ENCODE measurements at regions of chr16 and their contacts with region 1.

Region 1: DNA sequence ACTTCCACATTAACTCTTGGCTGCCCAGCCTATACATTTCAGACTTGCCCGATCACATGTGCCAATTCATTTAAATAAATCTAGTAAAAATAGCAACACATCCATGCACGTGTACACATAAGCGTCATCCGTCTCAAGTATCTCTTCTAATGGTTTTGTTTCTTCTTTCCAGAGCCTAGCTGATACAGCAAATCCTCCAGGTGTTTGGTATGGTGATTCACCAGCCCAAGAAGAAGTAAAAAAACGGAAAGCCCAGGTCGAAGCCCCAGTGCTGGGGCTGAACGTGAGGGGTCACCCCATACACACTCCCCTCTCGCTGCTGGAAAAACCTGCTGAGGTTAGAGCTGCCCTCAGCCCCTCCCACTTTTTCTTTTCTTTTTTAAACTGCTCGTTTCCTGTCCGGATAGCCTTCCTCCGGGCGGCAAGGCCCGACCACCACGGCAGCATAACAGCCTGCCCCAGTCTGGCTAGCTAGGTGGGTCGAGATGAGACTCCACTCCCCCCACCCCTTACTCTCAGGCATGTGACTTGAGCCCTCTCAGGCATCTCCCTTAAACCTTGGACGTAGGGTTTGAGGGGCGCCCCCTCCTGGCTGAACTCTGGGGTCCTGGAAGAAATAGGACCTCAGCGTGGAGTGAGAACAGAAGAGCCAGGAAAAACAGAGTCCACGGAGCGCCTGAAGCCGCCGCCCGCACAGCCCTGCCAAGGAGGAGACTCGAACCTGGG is 13.9 kb upstream of the OR1F1 start:
- DNase-seq: no peak
- H3K4me3 ChIP-seq: peak overlapping the region; percentile 23; the same call in 1 of the 2 replicates
- CTCF ChIP-seq: peak; percentile 37

Region 2: DNA sequence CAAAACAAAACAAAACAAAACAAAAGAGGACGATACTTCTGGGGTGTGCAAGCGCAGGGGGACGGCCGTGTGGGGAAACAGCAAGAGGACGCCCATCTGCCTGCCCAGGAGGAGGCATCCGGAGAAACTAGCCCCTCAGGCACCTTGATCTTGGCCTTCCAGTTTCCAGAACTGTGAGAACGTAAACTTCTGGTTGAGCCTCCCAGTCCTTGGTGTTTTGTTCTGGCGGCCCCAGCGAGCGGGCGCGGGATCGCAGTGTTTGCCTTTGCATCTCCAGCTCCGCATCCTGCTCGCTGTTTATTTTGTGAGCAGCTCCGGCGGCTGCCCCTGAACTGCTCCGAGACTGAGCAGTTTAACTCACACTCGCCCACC is 128.7 kb before region 1 on chr16:
- CTCF ChIA-PET with region 1: no interaction called
- POLR2A ChIA-PET with region 1: no interaction called
- DNase-seq: no peak
- H3K4me3 ChIP-seq: peak overlapping the region; percentile 43
- CTCF ChIP-seq: no peak

Region 3: DNA sequence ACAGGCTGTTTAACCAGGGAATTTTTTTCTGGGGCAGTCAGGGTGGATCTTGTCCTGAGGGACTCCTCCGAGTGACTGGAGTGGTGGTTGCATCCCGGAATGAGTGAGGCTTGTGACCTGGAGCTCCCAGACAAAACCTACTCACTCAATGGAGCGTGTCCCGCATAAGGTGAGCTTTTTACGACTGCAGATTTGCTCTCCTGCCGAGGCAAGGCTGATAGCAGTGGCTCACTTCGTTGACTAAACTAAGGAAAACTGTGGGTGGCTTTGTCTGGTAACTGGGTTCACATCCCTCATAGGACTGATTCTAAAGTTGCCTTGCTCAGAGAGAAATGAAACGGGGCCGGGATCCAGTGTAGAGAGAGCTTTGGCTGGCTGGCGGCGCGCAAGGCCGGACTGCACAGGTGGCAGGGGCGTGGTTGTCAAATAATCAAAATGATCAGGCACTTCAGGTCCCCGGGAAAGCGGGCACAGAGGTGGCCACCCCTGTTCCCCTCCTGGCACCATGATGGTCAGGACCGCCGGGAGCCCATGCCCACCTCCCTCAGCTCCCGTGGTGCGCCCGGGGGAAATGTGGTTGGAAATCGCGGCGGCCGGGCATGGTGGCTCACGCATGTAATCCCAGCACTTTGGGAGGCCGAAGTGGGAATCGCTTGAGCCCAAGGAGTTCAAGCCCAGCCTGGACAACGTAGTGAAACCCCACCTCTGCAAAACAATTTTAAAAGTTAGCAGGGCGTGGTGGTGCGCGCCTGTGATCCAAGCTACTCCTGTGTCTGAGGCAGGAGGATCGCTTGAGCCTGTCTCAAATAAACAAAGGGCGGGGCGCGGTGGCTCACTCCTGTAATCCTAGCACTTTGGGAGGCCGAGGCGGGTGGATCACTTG is 12.7 kb before region 1 on chr16:
- CTCF ChIA-PET with region 1: interaction called, 15 read pairs
- POLR2A ChIA-PET with region 1: no interaction called
- DNase-seq: no peak
- H3K4me3 ChIP-seq: no peak overlapping the region
- CTCF ChIP-seq: no peak

Region 4: DNA sequence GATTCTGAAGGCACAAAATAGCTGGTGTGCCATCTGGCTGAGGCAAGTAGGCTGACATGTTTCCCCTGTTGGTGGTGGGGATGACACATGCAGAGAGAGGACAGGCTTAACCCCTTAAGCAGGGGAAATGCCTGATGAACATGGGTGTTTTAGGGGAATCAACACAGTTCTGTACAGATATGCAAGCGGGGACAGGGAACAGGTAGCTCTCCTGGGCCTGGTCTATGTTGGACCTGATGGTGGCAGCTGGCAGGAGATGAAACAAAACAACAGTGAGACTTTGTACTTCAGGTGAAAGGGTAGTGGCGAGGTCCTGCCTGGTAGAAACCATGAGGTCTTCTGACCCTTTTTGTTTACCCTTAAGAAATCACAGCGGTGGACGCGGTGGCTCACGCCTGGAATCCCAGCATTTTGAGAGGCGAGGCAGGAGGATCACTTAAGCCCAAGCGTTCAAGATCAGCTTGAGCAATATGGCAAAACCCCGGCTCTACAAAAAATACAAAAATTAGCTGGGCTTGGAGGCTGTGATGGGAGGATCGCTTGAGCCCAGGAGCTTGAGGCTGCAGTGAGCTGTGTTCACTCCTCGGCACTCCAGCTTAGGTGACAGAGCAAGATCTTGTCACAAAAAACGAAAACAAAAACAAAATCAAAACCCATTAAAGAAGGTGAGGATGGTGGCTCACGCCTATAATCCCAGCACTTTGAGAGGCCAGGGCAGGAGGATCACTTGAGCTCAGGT is 24.4 kb after region 1 on chr16:
- CTCF ChIA-PET with region 1: no interaction called
- POLR2A ChIA-PET with region 1: no interaction called
- DNase-seq: no peak
- H3K4me3 ChIP-seq: no peak overlapping the region
- CTCF ChIP-seq: no peak